Heart right ventricle (tissue), 16 donors: ENCODE measurements at regions of chr7 and their contacts with region 1.

Region 1: GRCh38 chr7:117819558-117819957 is 53.7 kb downstream of the CTTNBP2 start:
- DNase-seq: no peak
- ATAC-seq: no peak
- H3K4me3 ChIP-seq: no peak overlapping the region
- H3K27ac ChIP-seq: no peak overlapping the region
- H3K4me1 ChIP-seq: no peaks in the 10 kb centered on the region
- H3K27me3 ChIP-seq: no peaks in the 10 kb centered on the region
- CTCF ChIP-seq: no peak

Region 2: DNA sequence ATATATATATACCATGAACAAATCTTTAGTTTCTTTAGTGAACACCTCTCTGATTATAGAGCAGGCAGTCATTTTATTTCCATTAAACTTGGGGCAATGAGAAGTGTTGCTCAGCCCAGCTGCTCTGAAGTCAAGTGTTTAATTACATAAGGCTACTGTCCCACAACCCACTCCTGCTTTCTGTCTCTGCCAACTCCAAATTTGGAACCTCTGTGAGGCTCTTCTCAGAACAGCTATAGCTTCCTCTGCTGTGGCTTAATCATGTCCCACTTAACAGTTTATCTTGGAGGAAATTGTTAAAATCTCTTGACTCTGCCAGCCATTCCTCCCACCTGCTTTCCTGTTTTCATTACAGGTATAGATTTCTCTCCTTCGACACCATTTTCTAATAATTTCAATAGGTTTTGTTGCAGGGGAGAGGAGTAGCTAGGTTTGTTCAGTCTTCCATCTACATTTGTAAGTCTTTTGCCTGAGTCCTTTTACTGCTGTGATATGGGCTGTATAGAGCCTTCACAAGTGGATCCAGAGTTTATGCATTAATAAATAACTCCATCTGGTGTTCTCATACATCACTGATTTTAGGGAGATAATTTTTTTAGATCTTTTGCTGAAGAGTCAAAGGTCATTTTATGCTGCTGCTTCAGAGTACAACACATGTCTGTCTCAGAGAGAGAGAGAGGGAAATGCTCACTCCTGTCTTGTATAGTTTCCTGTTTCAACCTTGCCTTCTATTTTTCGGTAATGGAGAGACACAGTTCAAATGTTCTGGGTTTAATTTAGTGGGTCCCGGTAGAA is 667.1 kb before region 1 on chr7:
- intact Hi-C with region 1: no loop called
- DNase-seq: peak in 1 of 2 donors; percentile 19
- ATAC-seq: peak; percentile 62 to 88 (median 78)
- H3K4me3 ChIP-seq: no peak overlapping the region
- H3K27ac ChIP-seq: no peak overlapping the region
- H3K4me1 ChIP-seq: peaks cover 3 to 49% (median 19%) of the 10 kb centered on the region in 9 donors
- H3K27me3 ChIP-seq: no peaks in the 10 kb centered on the region
- CTCF ChIP-seq: no peak

Region 3: GRCh38 chr7:117731455-117731854 is 88.1 kb before region 1 on chr7:
- intact Hi-C with region 1: no loop called
- DNase-seq: no peak
- ATAC-seq: peak in 2 of 8 donors; percentile 92 to 93
- H3K4me3 ChIP-seq: no peak overlapping the region
- H3K27ac ChIP-seq: no peak overlapping the region
- H3K4me1 ChIP-seq: no peaks in the 10 kb centered on the region
- H3K27me3 ChIP-seq: no peaks in the 10 kb centered on the region
- CTCF ChIP-seq: no peak

Region 4: DNA sequence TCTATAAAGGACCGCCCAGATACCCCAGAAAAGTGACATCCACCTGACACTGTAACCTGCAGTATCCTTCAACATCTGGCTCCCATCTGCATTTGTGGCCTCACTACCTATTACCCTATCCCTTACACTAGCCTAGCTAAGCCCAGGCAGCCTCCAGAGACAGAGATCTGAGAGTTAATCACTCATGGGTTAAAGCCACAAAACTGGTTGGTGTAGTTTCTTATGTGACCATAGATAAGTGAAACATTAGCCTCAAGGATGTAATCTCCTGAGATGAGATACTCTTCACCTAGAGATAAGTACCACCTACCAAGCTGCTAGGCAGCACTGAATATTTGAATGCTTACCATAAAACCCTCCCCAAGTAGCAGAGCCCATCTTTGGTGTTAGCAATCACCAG is 18.3 kb after region 1 on chr7:
- intact Hi-C with region 1: loop called in 1 of 10 experiments (anchors 1 kb)
- DNase-seq: no peak
- ATAC-seq: no peak
- H3K4me3 ChIP-seq: no peak overlapping the region
- H3K27ac ChIP-seq: no peak overlapping the region
- H3K4me1 ChIP-seq: peaks cover 0 to 6% (median 0%) of the 10 kb centered on the region in 9 donors
- H3K27me3 ChIP-seq: no peaks in the 10 kb centered on the region
- CTCF ChIP-seq: no peak

Region 5: DNA sequence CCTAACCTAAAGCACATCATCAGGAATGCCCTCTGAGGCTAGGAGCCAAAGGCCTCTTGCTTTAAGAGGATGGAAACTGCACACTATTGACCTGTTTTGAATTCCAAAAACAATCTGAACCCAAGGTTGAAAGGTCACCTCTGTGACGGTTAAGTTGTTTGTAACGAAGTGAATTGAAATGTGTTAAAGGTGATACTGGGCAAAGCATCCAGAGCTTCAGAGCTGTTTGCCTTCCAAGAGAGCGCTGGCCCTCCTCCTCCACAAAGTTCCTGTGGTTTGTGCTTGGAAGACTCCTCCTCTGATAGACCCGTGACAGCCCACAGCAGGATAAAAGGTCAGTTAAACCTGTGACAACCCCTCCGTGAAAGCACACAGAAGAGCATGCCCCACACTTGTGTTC is 187.4 kb after region 1 on chr7:
- intact Hi-C with region 1: no loop called
- DNase-seq: no peak
- ATAC-seq: no peak
- H3K4me3 ChIP-seq: no peak overlapping the region
- H3K27ac ChIP-seq: no peak overlapping the region
- H3K4me1 ChIP-seq: no peaks in the 10 kb centered on the region
- H3K27me3 ChIP-seq: peaks cover 0 to 10% (median 0%) of the 10 kb centered on the region in 7 donors
- CTCF ChIP-seq: no peak